ENCODE measurements at regions of chr16 and their contacts with region 1.

Region 1: GRCh38 chr16:1492923-1493745 is at the start of gene TELO2:
- DNase-seq: peak; percentile 72
- H3K4me3 ChIP-seq: peak within 1 kb of the TSS; percentile 77 to 84 (median 82)
- H3K27ac ChIP-seq: peak within 1 kb of the TSS; percentile 41
- H3K4me1 ChIP-seq: peaks cover 21% of the 10 kb centered on the region
- H3K27me3 ChIP-seq: no peaks in the 10 kb centered on the region
- CTCF ChIP-seq: no peak
- total RNA-seq, gene TELO2: 12.7 to 37.7 TPM

Region 2: DNA sequence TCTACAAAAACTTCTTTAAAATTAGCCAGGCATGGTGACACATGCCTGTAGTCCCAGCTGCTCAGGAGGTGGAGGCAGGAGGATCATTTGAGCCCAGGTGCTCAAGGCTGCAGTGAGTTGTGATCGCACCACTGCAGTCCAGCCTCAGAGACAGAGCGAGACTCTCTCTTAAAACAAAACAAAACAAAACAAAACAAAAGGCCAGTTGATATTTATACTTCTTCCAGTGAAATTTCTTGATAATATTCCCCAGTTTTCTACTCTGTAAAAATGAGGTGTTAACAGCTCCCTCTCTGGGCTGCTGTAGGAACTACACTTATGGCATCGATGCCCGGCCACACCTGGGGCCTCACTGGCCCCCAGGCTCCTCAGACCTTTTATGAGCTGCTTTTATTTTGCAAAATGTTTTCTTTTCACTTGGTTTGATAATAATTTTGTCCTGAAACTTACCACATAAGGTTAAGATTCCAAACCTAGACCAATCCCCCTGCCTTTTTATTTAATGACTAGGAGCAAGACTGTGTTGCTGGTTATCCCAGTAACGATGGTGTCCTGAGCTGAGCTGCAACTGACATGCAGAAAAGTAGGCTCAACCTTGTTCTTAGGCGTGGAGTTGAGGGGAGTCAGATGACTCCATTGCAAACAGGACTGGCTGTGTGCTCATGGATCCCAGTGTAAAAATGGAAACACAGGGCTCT is 230.5 kb after region 1 on chr16:
- CTCF ChIA-PET with region 1: no interaction called
- dilution Hi-C with region 1: no loop called
- in situ Hi-C with region 1: no loop called
- intact Hi-C with region 1: loop called (anchors 1 kb)
- DNase-seq: peak; percentile 51
- H3K4me3 ChIP-seq: no peak overlapping the region
- H3K27ac ChIP-seq: no peak overlapping the region
- H3K4me1 ChIP-seq: peaks cover 5% of the 10 kb centered on the region
- H3K27me3 ChIP-seq: no peaks in the 10 kb centered on the region
- CTCF ChIP-seq: peak; percentile 79 to 80

Measured in mammary epithelial cell (primary cell).